GM12878 (cell line): ENCODE measurements at regions of chr7 and their contacts with region 1.

Region 1: GRCh38 chr7:94042381-94042780 is 38.2 kb upstream of the BET1 start:
- DNase-seq: no peak
- ATAC-seq: peak; percentile 80
- H3K4me3 ChIP-seq: no peak overlapping the region
- H3K27ac ChIP-seq: no peak overlapping the region
- H3K4me1 ChIP-seq: no peaks in the 10 kb centered on the region; the same call in 1 of the 2 replicates
- H3K27me3 ChIP-seq: no peaks in the 10 kb centered on the region
- CTCF ChIP-seq: 0 out of 6 replicates have a peak, but pooled peaks of 1 of the 3 experiments have one; percentile 3
- EP300 ChIP-seq: 0 out of 4 replicates have a peak, but pooled peaks of 1 of the 2 experiments have one; percentile 40
- POLR2A ChIP-seq: no peak
- RAD21 ChIP-seq: no peak

Region 2: DNA sequence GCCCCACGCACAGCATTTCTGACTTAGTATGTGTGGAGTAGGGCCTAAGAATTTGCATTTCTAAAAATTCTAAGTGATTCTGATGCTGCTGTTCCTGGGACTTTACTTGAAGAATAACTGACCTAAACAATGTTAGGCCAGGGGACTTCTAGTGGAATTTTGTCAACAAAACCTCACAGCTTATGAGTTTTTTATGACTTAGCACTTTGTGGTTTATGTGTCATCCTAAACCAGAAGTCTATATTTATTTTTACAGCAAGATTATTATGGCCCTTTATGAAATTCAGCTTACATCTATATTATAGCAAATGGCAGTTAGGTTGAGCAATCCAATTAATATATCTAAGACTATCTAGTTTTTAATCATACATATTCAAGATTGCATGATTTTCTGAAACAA is 13.6 kb before region 1 on chr7:
- CTCF ChIA-PET with region 1: interaction called, 9 read pairs
- POLR2A ChIA-PET with region 1: interaction called, 8 read pairs
- RAD21 ChIA-PET with region 1: interaction called, 5 read pairs
- SMC1A ChIA-PET with region 1: interaction called, 13 read pairs
- in situ Hi-C with region 1: no loop called
- intact Hi-C with region 1: no loop called
- DNase-seq: no peak
- ATAC-seq: peak; percentile 55
- H3K4me3 ChIP-seq: no peak overlapping the region
- H3K27ac ChIP-seq: no peak overlapping the region
- H3K4me1 ChIP-seq: no peaks in the 10 kb centered on the region
- H3K27me3 ChIP-seq: no peaks in the 10 kb centered on the region
- CTCF ChIP-seq: no peak
- EP300 ChIP-seq: no peak
- POLR2A ChIP-seq: no peak
- RAD21 ChIP-seq: no peak

Region 3: GRCh38 chr7:94190599-94191061 is 148.2 kb after region 1 on chr7:
- CTCF ChIA-PET with region 1: no interaction called
- POLR2A ChIA-PET with region 1: no interaction called
- RAD21 ChIA-PET with region 1: no interaction called
- SMC1A ChIA-PET with region 1: no interaction called
- in situ Hi-C with region 1: no loop called
- intact Hi-C with region 1: no loop called
- DNase-seq: no peak
- ATAC-seq: no peak
- H3K4me3 ChIP-seq: no peak overlapping the region
- H3K27ac ChIP-seq: no peak overlapping the region
- H3K4me1 ChIP-seq: no peaks in the 10 kb centered on the region
- H3K27me3 ChIP-seq: no peaks in the 10 kb centered on the region
- CTCF ChIP-seq: no peak
- EP300 ChIP-seq: no peak
- POLR2A ChIP-seq: no peak
- RAD21 ChIP-seq: no peak

Region 4: GRCh38 chr7:94301024-94301586 is 258.7 kb after region 1 on chr7:
- CTCF ChIA-PET with region 1: no interaction called
- POLR2A ChIA-PET with region 1: no interaction called
- RAD21 ChIA-PET with region 1: no interaction called
- SMC1A ChIA-PET with region 1: no interaction called
- in situ Hi-C with region 1: no loop called
- intact Hi-C with region 1: no loop called
- DNase-seq: no peak
- ATAC-seq: peak; percentile 53
- H3K4me3 ChIP-seq: no peak overlapping the region
- H3K27ac ChIP-seq: no peak overlapping the region
- H3K4me1 ChIP-seq: no peaks in the 10 kb centered on the region
- H3K27me3 ChIP-seq: no peaks in the 10 kb centered on the region
- CTCF ChIP-seq: no peak
- EP300 ChIP-seq: no peak
- POLR2A ChIP-seq: no peak
- RAD21 ChIP-seq: no peak